ENCODE measurements at regions of chr7 and their contacts with region 1.

Region 1: GRCh38 chr7:129210256-129210988 is 14.4 kb upstream of the AHCYL2 start:
- DNase-seq: no peak
- ATAC-seq: peak; percentile 89
- H3K4me3 ChIP-seq: no peak overlapping the region
- H3K27ac ChIP-seq: no peak overlapping the region
- H3K4me1 ChIP-seq: no peaks in the 10 kb centered on the region; the same call in 1 of the 2 replicates
- H3K27me3 ChIP-seq: no peaks in the 10 kb centered on the region
- CTCF ChIP-seq: peak; percentile 94

Region 2: DNA sequence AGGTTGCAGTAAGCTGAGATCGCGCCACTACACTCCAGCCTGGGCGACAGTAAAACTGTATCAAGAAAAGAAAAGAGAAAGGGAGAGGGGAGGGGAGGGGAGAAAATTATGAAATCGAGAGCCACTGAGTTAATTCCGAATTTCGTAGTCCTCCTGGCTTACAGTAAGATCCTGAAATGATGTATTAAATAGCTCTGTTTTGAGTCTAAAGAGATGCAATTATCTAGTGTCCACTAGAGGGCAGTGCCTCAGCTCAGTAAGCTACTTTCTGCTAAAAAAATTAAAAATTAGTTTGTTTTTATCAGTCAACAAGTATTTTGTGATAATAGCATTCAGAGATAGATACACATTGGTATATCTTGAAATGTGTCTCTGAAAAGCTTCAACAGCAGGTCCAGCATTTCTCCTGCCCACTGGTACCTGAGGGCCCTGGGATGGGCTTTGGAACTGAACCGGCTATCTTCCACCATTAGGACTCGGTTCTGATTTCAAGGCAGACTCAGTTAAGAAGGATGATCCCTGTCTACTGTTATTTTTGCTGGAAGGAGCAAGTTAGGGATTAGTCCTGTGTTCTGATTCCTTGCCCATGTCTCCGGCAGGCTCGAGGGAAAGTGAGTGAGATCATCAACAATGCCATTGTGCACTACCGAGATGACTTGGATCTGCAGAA is 46.4 kb before region 1 on chr7:
- CTCF ChIA-PET with region 1: interaction called, 29 read pairs
- POLR2A ChIA-PET with region 1: no interaction called
- in situ Hi-C with region 1: no loop called
- intact Hi-C with region 1: loop called (anchors 1 kb)
- DNase-seq: peak; percentile 27
- ATAC-seq: no peak
- H3K4me3 ChIP-seq: no peak overlapping the region
- H3K27ac ChIP-seq: no peak overlapping the region
- H3K4me1 ChIP-seq: no peaks in the 10 kb centered on the region; the same call in 1 of the 2 replicates
- H3K27me3 ChIP-seq: no peaks in the 10 kb centered on the region
- CTCF ChIP-seq: peak; percentile 89

Region 3: GRCh38 chr7:129394982-129395914 is 184.8 kb after region 1 on chr7:
- CTCF ChIA-PET with region 1: no interaction called
- POLR2A ChIA-PET with region 1: no interaction called
- in situ Hi-C with region 1: no loop called
- intact Hi-C with region 1: no loop called
- DNase-seq: no peak
- ATAC-seq: no peak
- H3K4me3 ChIP-seq: no peak overlapping the region
- H3K27ac ChIP-seq: no peak overlapping the region
- H3K4me1 ChIP-seq: no peaks in the 10 kb centered on the region
- H3K27me3 ChIP-seq: no peaks in the 10 kb centered on the region
- CTCF ChIP-seq: no peak

Measured in Panc1 (cell line).